IMR-90 (cell line): ENCODE measurements at regions of chr15 and their contacts with region 1.

Region 1: GRCh38 chr15:71448688-71449114 is 333.4 kb downstream of the THSD4 start:
- DNase-seq: peak; percentile 71
- ATAC-seq: peak; percentile 75
- H3K4me3 ChIP-seq: no peak overlapping the region
- H3K27ac ChIP-seq: no peak overlapping the region
- H3K4me1 ChIP-seq: peaks cover 13% of the 10 kb centered on the region
- H3K27me3 ChIP-seq: no peaks in the 10 kb centered on the region
- CTCF ChIP-seq: peak; percentile 93
- POLR2A ChIP-seq: no peak
- RAD21 ChIP-seq: peak; percentile 88

Region 2: DNA sequence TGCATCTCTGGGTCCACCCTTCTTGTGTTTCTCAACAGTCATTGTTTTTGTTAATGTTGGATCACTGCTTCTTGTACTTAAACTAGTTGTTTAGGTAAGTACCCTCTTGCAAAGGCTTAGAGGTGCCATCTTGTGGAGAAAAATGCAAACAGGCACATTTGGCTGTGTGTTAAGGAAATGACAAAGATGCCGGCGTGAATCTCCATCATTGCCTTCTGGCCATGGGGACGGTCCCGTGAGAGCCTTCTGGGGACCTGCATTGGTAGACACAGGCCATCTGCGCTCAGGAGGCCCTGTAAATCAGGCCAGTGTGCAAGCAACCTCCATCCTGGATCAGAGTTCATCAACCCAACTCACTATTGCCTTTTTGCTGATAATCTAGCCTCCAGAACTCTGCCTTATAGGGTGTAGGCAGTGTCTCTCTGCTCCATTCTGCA is 203.1 kb after region 1 on chr15:
- CTCF ChIA-PET with region 1: interaction called, 3 read pairs
- POLR2A ChIA-PET with region 1: no interaction called
- dilution Hi-C with region 1: no loop called
- in situ Hi-C with region 1: loop called (anchors 5 kb)
- intact Hi-C with region 1: loop called (anchors 1 kb)
- DNase-seq: peak; percentile 86
- ATAC-seq: peak; percentile 93
- H3K4me3 ChIP-seq: no peak overlapping the region
- H3K27ac ChIP-seq: no peak overlapping the region
- H3K4me1 ChIP-seq: peaks cover 6% of the 10 kb centered on the region
- H3K27me3 ChIP-seq: no peaks in the 10 kb centered on the region
- CTCF ChIP-seq: peak; percentile 74
- POLR2A ChIP-seq: no peak
- RAD21 ChIP-seq: peak; percentile 82

Region 3: DNA sequence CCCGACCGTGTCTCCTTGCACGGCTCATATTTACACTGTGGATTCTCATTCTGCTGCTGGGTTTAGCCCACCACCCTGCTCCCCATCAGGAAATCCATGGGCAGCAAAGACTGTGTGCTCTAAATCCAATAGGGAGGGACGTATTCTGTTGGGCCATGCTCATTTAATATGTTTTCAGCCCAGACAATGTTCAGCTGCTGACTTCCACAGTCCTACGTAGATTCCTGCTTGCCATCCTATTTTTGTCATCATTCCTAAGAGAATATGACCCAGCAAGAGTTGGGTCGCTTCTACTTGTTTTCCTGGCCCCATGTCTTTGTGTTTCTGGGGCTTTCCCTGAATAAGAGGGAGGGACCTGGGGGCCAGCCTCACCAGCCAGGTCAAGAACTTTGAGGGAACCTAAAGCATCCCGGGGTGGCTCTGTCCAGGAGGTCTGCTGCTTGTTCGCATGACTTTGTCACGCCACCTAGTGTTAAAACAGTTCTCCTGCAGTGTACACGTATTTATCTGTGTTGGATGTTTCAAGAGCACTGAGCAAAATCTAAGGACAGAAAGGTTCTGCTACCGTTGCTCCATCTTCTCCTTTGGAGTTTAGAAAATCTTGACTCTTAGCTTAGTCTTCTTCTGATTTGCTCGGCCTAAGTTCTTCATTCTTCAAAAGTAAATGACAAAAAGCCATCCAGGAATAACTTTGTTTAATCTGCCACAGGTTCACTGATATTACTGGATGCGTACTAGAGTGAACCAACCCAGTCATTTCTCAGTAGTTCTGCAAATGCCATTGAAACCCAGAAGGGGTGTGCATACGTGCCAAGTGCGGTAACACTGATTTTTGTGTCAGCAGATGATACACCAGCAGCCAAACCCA is 281.8 kb after region 1 on chr15:
- CTCF ChIA-PET with region 1: no interaction called
- POLR2A ChIA-PET with region 1: no interaction called
- dilution Hi-C with region 1: no loop called
- in situ Hi-C with region 1: loop called (anchors 5 kb)
- intact Hi-C with region 1: loop called (anchors 1 kb)
- DNase-seq: peak; percentile 77
- ATAC-seq: peak; percentile 96
- H3K4me3 ChIP-seq: no peak overlapping the region
- H3K27ac ChIP-seq: no peak overlapping the region
- H3K4me1 ChIP-seq: peaks cover 3% of the 10 kb centered on the region
- H3K27me3 ChIP-seq: no peaks in the 10 kb centered on the region; the same call in 1 of the 2 replicates
- CTCF ChIP-seq: peak; percentile 75
- POLR2A ChIP-seq: no peak
- RAD21 ChIP-seq: peak; percentile 82

Region 4: DNA sequence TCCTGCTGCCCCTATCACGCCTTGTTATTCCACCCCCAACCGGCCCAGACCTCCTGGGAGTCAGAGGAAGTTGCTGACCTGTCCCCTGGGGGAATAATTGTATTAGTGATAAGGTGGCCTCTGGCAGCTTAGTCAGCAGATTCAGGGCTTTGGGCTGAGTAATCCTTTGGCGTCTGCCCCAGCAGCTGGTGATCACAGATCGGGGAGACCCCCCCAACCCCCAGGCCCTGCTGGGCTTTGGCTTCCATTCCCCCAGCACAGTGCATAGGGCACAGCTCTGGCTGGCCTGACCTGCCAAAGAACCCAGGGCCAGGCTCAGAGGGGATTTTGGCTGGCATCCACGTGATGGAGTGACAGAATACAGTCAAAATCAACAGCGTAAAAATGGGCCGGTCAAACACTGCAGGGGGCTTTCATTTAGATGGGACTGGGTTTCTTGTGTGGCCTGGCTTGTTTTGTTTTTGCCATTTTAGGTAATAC is 357.8 kb after region 1 on chr15:
- CTCF ChIA-PET with region 1: no interaction called
- POLR2A ChIA-PET with region 1: no interaction called
- dilution Hi-C with region 1: no loop called
- in situ Hi-C with region 1: loop called (anchors 5 kb)
- intact Hi-C with region 1: loop called (anchors 1 kb)
- DNase-seq: peak; percentile 69
- ATAC-seq: peak; percentile 51
- H3K4me3 ChIP-seq: no peak overlapping the region
- H3K27ac ChIP-seq: no peak overlapping the region
- H3K4me1 ChIP-seq: peaks cover 15% of the 10 kb centered on the region
- H3K27me3 ChIP-seq: no peaks in the 10 kb centered on the region
- CTCF ChIP-seq: no peak
- POLR2A ChIP-seq: no peak
- RAD21 ChIP-seq: no peak